K562 (cell line): ENCODE measurements at regions of chr20 and their contacts with region 1.

Region 1: GRCh38 chr20:45880988-45881788 is at the start of gene ZSWIM1:
- DNase-seq: peak; percentile 99 to 100 (median 99)
- ATAC-seq: peak; percentile 99
- H3K4me3 ChIP-seq: peak within 1 kb of the TSS; percentile 56
- H3K27ac ChIP-seq: peak within 1 kb of the TSS; percentile 83
- H3K4me1 ChIP-seq: peaks cover 27% of the 10 kb centered on the region in 2 experiments
- H3K27me3 ChIP-seq: no peaks in the 10 kb centered on the region
- CTCF ChIP-seq: no peak
- EP300 ChIP-seq: no peak
- POLR2A ChIP-seq: peak; percentile 97
- RAD21 ChIP-seq: 0 out of 4 replicates have a peak, but pooled peaks of 1 of the 2 experiments have one; percentile 24
- polyA plus RNA-seq, gene ZSWIM1: 2.5 to 3.1 TPM

Region 2: GRCh38 chr20:45833030-45833882 is 47.9 kb before region 1 on chr20 and contains the start of gene SNX21:
- CTCF ChIA-PET with region 1: no interaction called
- POLR2A ChIA-PET with region 1: interaction called, 5 read pairs
- in situ Hi-C with region 1: no loop called
- intact Hi-C with region 1: loop called (anchors 10 kb)
- DNase-seq: peak in 2 of 4 experiments; percentile 57 to 61
- ATAC-seq: peak; percentile 75
- H3K4me3 ChIP-seq: peak within 1 kb of the TSS; percentile 43
- H3K27ac ChIP-seq: no peak within 1 kb of the TSS
- H3K4me1 ChIP-seq: peaks cover 32 to 34% of the 10 kb centered on the region in 2 experiments
- H3K27me3 ChIP-seq: no peaks in the 10 kb centered on the region
- CTCF ChIP-seq: no peak
- EP300 ChIP-seq: no peak
- POLR2A ChIP-seq: no peak
- RAD21 ChIP-seq: no peak
- polyA plus RNA-seq, gene SNX21: 0.10 to 0.42 TPM